ENCODE measurements at regions of chr3 and their contacts with region 1.

Region 1: DNA sequence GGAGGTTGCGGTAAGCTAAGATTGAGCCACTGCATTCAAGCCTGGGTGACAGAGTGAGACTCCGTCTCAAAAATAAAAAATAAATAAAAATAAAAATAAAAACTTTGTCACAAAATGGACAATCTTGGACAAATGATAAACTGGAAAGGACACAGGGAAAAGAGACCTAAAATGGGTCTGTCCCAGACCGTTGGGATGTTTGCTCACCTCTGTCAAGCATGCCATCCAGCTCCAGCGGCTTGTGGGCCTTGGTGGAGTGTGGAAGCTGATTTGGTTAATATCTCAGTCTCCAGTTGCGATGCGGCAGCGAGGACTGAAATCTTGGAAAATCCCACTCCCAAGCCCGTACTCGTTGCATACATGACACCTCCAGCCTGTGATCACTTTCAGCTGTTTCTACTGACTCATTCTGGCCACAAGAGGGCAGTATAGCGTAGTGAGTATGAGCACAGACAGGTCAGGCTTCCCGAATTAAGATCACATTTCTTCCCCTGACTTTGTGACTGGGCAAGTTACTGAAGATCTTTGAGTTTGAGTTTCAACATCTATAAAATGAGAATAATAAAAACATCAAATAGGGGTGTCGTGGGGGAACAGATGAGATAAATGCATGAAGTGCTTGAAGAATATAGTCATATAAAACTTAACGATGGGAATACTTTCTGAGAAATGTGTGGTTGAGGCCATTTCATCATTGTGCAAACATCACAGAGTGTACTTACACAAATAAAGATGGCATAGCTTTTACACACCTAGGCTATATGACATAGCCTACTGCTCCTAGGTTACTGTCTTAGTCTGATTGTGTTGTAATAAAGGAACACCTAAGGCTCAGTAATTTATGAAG is 19.6 kb upstream of the MOBP start:
- DNase-seq: peak; percentile 80
- ATAC-seq: peak; percentile 98
- H3K4me3 ChIP-seq: no peak overlapping the region
- H3K27ac ChIP-seq: no peak overlapping the region
- H3K4me1 ChIP-seq: no peaks in the 10 kb centered on the region
- H3K27me3 ChIP-seq: no peaks in the 10 kb centered on the region; a peak in 2 of 5 replicates
- CTCF ChIP-seq: peak; percentile 90
- EP300 ChIP-seq: no peak
- POLR2A ChIP-seq: no peak
- RAD21 ChIP-seq: peak; percentile 52

Region 2: GRCh38 chr3:39415983-39416382 is 31.9 kb before region 1 on chr3:
- CTCF ChIA-PET with region 1: no interaction called
- POLR2A ChIA-PET with region 1: no interaction called
- in situ Hi-C with region 1: no loop called
- intact Hi-C with region 1: loop called (anchors 2 kb)
- DNase-seq: no peak
- ATAC-seq: peak; percentile 61
- H3K4me3 ChIP-seq: no peak overlapping the region
- H3K27ac ChIP-seq: no peak overlapping the region
- H3K4me1 ChIP-seq: 0 out of 2 replicates have a peak, but pooled peaks cover 2% of the 10 kb centered on the region
- H3K27me3 ChIP-seq: no peaks in the 10 kb centered on the region
- CTCF ChIP-seq: no peak
- EP300 ChIP-seq: no peak
- POLR2A ChIP-seq: peak; percentile 41 to 48; a peak in 3 of 4 replicates
- RAD21 ChIP-seq: no peak

Region 3: GRCh38 chr3:39501968-39502837 is 54.3 kb after region 1 on chr3:
- CTCF ChIA-PET with region 1: interaction called, 43 read pairs
- POLR2A ChIA-PET with region 1: no interaction called
- in situ Hi-C with region 1: loop called (anchors 5 kb)
- intact Hi-C with region 1: loop called (anchors 1 kb)
- DNase-seq: no peak
- ATAC-seq: no peak
- H3K4me3 ChIP-seq: no peak overlapping the region
- H3K27ac ChIP-seq: no peak overlapping the region
- H3K4me1 ChIP-seq: 0 out of 2 replicates have a peak, but pooled peaks cover 9% of the 10 kb centered on the region
- H3K27me3 ChIP-seq: peaks cover 2 to 11% of the 10 kb centered on the region in 2 experiments; a peak in 4 of 5 replicates
- CTCF ChIP-seq: no peak
- EP300 ChIP-seq: no peak
- POLR2A ChIP-seq: no peak
- RAD21 ChIP-seq: no peak

Region 4: DNA sequence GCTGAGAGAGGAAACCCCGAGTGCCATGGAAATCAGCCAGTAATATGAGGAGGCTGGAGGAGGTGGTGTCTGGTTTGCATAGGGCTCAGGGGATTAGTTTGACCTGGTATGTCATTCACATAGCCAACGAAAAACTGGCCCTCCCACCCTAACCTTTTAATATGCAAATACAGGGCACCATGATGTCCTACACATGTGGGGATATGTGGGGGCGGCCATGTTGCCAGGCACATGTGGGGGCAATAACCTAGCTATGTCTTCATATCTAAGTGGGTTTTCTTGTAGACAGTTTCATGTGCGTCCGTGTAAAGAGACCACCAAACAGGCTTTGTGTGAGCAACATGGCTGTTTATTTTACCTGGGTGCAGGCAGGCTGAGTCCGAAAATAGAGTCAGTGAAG is 129.7 kb after region 1 on chr3:
- CTCF ChIA-PET with region 1: no interaction called
- POLR2A ChIA-PET with region 1: no interaction called
- in situ Hi-C with region 1: no loop called
- intact Hi-C with region 1: no loop called
- DNase-seq: no peak
- ATAC-seq: no peak
- H3K4me3 ChIP-seq: no peak overlapping the region
- H3K27ac ChIP-seq: no peak overlapping the region
- H3K4me1 ChIP-seq: no peaks in the 10 kb centered on the region
- H3K27me3 ChIP-seq: peaks cover 1 to 7% of the 10 kb centered on the region in 2 experiments; a peak in 2 of 5 replicates
- CTCF ChIP-seq: no peak
- EP300 ChIP-seq: no peak
- POLR2A ChIP-seq: no peak
- RAD21 ChIP-seq: no peak

Measured in HepG2 (cell line).